ENCODE measurements at regions of chr14 and their contacts with region 1.

Region 1: DNA sequence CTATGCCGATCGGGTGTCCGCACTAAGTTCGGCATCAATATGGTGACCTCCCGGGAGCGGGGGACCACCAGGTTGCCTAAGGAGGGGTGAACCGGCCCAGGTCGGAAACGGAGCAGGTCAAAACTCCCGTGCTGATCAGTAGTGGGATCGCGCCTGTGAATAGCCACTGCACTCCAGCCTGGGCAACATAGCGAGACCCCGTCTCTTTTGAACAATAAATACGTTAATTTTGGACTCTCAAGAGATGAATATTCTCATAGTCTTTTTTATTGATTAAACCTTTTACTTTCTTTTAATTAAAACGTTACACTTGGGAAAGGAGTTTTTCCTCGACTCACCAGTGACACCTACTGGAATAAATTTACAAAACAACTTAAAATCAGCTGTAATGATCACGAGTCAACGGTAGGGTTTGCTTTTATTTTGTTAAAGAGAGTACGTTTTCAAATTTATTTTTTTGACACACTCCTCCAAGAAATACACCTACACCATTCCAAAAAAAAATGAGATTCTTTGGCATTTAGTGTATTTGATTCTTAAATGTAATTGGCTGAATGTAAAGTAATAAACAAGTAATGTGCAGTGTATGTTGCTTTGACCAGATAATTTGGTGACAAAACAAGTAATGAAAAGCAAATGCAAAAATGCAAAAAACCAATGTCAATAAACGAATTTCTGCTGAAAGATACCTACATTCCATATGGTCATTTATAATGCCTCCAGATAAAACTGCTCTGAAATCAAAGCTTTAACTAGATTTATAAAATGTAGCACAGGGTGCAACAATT is 687 bp upstream of the RPS29 start:
- DNase-seq: peak; percentile 82
- ATAC-seq: peak; percentile 64
- H3K4me3 ChIP-seq: peak overlapping the region; percentile 15; the same call in 1 of the 2 replicates
- H3K27ac ChIP-seq: no peak overlapping the region
- H3K4me1 ChIP-seq: peaks cover 6% of the 10 kb centered on the region
- H3K27me3 ChIP-seq: no peaks in the 10 kb centered on the region
- CTCF ChIP-seq: peak; percentile 99
- POLR2A ChIP-seq: no peak
- RAD21 ChIP-seq: peak; percentile 49

Region 2: DNA sequence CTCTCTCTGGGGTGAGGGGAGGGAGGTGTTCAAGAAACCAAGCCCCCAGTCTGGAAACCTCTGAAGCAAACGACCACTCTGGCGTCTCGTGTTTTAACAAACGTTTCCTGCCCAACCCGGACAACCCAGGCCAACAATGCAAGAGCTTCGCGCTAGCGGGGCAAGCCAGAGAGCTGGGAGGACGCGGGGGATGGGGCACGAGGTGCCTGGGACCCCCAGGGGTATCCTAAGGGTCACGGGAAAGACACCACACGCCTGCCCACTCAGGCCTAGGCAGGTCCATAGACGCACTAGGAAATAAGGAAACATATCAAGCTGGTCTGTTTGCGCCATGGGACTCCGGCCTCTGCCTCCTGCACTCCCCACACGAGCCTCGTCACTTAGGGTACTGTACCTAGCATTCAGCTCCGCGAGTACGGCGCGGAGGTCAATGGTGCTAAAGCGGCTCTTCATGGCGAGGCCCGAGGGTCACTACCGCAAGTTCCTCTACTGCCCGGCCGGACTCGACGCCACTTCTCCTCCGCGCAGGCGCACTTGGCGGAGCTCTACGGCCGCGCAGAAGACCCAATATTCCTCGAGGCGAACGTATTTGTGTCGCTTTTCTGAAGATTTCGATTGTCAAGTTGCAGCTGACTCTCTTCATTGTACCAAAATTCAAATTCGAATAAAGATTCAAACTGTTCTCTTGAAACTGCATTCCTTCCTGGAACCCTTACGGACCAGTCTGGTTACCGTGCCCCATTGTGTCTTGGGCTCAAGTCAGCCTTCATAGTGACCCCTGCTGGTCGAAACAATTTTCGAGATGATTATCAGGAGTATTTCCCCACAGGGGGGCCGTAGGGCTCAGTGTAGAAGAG is 265.7 kb after region 1 on chr14 and contains the start of gene NEMF:
- CTCF ChIA-PET with region 1: no interaction called
- POLR2A ChIA-PET with region 1: interaction called, 11 read pairs
- dilution Hi-C with region 1: no loop called
- in situ Hi-C with region 1: no loop called
- intact Hi-C with region 1: no loop called
- DNase-seq: peak; percentile 83
- ATAC-seq: peak; percentile 86
- H3K4me3 ChIP-seq: peak within 1 kb of the TSS; percentile 89
- H3K27ac ChIP-seq: peak within 1 kb of the TSS; percentile 97
- H3K4me1 ChIP-seq: no peaks in the 10 kb centered on the region
- H3K27me3 ChIP-seq: no peaks in the 10 kb centered on the region
- CTCF ChIP-seq: peak; percentile 75
- POLR2A ChIP-seq: peak; percentile 69; the same call in 1 of the 2 replicates
- RAD21 ChIP-seq: peak; percentile 32
- total RNA-seq, gene NEMF: 30.5 and 76.1 TPM in 2 replicates

Measured in IMR-90 (cell line).